ENCODE measurements at regions of chr1 and their contacts with region 1.

Region 1: DNA sequence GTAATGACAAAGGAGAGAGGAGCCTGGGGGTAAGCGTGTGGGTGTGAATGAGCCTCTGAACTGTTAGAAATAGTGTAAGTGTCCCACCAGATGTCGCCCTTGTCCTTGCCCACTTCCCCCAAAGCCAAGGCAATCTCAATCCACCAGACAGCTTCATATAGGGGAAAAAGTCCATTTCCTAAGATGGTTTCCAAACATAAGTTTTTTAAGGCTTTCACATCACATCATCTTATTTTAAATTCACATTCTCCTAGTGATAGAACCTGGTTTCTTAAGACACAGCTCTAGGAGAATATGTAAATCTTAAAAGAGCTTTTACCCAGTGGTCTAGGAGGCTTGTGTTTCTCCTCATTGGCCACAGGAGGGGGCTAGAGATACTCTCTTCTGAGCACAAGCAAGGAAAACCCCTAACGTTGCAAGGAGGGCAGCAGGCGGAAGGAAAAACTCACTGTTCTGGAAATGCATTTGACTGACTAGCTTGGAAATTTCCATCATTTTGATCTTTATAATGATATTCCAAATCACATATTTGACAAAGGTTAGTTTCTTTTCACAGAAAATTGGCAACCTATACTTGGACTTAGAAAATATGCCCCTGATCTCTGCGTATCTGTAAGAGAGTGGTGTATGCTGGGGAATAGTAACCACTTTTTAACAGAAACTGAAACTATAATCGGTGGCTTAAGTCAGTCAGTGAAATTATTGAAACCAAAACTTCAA is 51.9 kb upstream of the LPAR3 start:
- DNase-seq: peak; percentile 48
- ATAC-seq: peak; percentile 92
- H3K4me3 Mint-ChIP-seq: no peak overlapping the region
- H3K27ac Mint-ChIP-seq: peak overlapping the region; percentile 36; the same call in 1 of the 2 replicates
- H3K4me1 Mint-ChIP-seq: peaks cover 26% of the 10 kb centered on the region
- H3K27me3 Mint-ChIP-seq: no peaks in the 10 kb centered on the region
- CTCF ChIP-seq: peak; percentile 66

Region 2: GRCh38 chr1:84803604-84804003 is 141.3 kb before region 1 on chr1:
- CTCF ChIA-PET with region 1: interaction called, 10 read pairs
- POLR2A ChIA-PET with region 1: no interaction called
- DNase-seq: no peak
- ATAC-seq: no peak
- H3K4me3 Mint-ChIP-seq: no peak overlapping the region
- H3K27ac Mint-ChIP-seq: no peak overlapping the region
- H3K4me1 Mint-ChIP-seq: no peaks in the 10 kb centered on the region
- H3K27me3 Mint-ChIP-seq: no peaks in the 10 kb centered on the region
- CTCF ChIP-seq: no peak

Region 3: GRCh38 chr1:84973498-84974334 is 28.8 kb after region 1 on chr1:
- CTCF ChIA-PET with region 1: interaction called, 12 read pairs
- POLR2A ChIA-PET with region 1: no interaction called
- DNase-seq: peak; percentile 21
- ATAC-seq: peak; percentile 67
- H3K4me3 Mint-ChIP-seq: no peak overlapping the region
- H3K27ac Mint-ChIP-seq: no peak overlapping the region
- H3K4me1 Mint-ChIP-seq: peaks cover 5% of the 10 kb centered on the region; the same call in 1 of the 2 replicates
- H3K27me3 Mint-ChIP-seq: peaks cover 3% of the 10 kb centered on the region; the same call in 1 of the 2 replicates
- CTCF ChIP-seq: no peak

Region 4: GRCh38 chr1:85048296-85049064 is 103.6 kb after region 1 on chr1 and contains the start of gene MCOLN3:
- CTCF ChIA-PET with region 1: interaction called, 30 read pairs
- POLR2A ChIA-PET with region 1: no interaction called
- DNase-seq: peak; percentile 68
- ATAC-seq: peak; percentile 62
- H3K4me3 Mint-ChIP-seq: peak within 1 kb of the TSS; percentile 84
- H3K27ac Mint-ChIP-seq: no peak within 1 kb of the TSS
- H3K4me1 Mint-ChIP-seq: peaks cover 27% of the 10 kb centered on the region
- H3K27me3 Mint-ChIP-seq: peaks cover 57% of the 10 kb centered on the region
- CTCF ChIP-seq: no peak
- total RNA-seq, gene MCOLN3: 3.5 to 6.4 TPM (median 3.8 TPM) in 3 replicates

Region 5: DNA sequence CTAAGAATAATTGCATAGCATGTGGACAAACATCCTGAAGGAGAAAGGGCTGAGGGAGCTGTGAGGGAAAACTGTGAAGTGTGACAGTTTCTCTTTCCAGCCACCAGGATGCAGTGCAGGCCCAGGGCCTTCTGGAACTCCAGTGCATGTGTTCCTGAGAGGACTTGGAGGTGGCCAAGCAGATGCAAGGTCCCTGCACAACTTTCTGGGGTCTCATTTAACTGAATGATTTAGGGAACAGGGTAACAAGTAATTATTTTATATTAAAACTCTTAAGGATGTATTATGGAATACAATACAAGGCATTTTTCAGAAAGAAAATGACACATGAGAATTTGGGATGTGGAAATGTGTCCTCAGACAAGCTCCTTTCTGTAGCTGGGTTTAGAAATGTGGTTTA is 164.5 kb after region 1 on chr1:
- CTCF ChIA-PET with region 1: interaction called, 31 read pairs
- POLR2A ChIA-PET with region 1: no interaction called
- DNase-seq: peak; percentile 64
- ATAC-seq: peak; percentile 100
- H3K4me3 Mint-ChIP-seq: no peak overlapping the region
- H3K27ac Mint-ChIP-seq: no peak overlapping the region
- H3K4me1 Mint-ChIP-seq: no peaks in the 10 kb centered on the region
- H3K27me3 Mint-ChIP-seq: peaks cover 3% of the 10 kb centered on the region; the same call in 1 of the 2 replicates
- CTCF ChIP-seq: peak; percentile 59

Region 6: DNA sequence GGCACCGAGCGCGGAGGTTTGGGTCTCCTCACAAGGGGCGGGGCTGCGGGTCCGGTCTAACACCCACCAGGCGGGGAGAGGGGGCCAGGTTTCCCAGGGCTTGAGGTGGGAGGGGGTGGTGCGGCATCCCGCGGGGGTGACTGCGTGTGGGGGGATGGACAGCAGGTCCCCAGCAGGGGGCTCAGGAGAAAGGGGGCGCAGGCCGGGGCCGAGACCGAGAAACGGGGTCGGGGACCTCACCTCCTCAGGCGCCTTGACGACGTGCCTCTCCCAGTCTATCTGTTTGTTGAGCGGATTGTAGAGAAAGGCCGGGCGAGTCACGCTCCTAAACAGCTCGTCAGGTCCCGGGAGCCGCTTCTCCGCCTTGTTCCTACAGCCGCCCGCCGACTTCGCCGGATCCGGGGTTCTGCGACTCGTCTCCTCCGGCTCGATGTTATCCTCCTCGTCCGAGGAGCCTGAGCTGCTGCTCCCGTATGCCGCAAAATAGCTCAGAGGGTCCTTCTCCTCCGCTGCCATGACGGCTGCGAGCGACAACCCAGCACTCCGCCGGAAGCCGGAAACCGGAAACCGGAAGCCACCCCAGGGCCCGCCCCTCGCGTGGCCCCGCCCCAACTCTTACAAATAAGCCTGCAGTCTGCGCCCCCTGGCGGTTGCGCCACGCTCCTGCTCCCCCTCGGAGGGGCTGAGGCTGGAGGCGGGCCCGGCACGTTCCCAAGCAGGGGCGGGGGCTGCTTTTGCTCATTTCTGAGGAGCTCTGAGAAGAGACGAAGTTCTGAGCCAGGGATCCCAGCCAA is 314.4 kb after region 1 on chr1 and contains the start of gene C1orf52:
- CTCF ChIA-PET with region 1: interaction called, 63 read pairs
- POLR2A ChIA-PET with region 1: no interaction called
- DNase-seq: peak; percentile 99
- ATAC-seq: peak; percentile 96
- H3K4me3 Mint-ChIP-seq: peak within 1 kb of the TSS; percentile 95
- H3K27ac Mint-ChIP-seq: peak within 1 kb of the TSS; percentile 84
- H3K4me1 Mint-ChIP-seq: peaks cover 23% of the 10 kb centered on the region
- H3K27me3 Mint-ChIP-seq: peaks cover 7% of the 10 kb centered on the region
- CTCF ChIP-seq: peak; percentile 99
- total RNA-seq, gene C1orf52: 35.8 to 44.5 TPM (median 40.2 TPM) in 3 replicates